ENCODE measurements at regions of chr20 and their contacts with region 1.

Region 1: GRCh38 chr20:35954200-35954906 is at the start of gene SCAND1:
- DNase-seq: peak; percentile 97 to 99 (median 98)
- H3K4me3 ChIP-seq: peak within 1 kb of the TSS; percentile 64 to 96
- H3K4me3 Mint-ChIP-seq: peak within 1 kb of the TSS; percentile 99 to 100 (median 99)
- H3K27ac ChIP-seq: peak within 1 kb of the TSS; percentile 96
- H3K27ac Mint-ChIP-seq: peak within 1 kb of the TSS; percentile 99 to 100 (median 99)
- H3K4me1 ChIP-seq: peaks cover 25% of the 10 kb centered on the region
- H3K4me1 Mint-ChIP-seq: peaks cover 6 to 35% (median 14%) of the 10 kb centered on the region in 4 donors
- H3K27me3 ChIP-seq: no peaks in the 10 kb centered on the region
- H3K27me3 Mint-ChIP-seq: no peaks in the 10 kb centered on the region
- total RNA-seq, gene SCAND1: 45.1 to 53.8 TPM

Region 2: DNA sequence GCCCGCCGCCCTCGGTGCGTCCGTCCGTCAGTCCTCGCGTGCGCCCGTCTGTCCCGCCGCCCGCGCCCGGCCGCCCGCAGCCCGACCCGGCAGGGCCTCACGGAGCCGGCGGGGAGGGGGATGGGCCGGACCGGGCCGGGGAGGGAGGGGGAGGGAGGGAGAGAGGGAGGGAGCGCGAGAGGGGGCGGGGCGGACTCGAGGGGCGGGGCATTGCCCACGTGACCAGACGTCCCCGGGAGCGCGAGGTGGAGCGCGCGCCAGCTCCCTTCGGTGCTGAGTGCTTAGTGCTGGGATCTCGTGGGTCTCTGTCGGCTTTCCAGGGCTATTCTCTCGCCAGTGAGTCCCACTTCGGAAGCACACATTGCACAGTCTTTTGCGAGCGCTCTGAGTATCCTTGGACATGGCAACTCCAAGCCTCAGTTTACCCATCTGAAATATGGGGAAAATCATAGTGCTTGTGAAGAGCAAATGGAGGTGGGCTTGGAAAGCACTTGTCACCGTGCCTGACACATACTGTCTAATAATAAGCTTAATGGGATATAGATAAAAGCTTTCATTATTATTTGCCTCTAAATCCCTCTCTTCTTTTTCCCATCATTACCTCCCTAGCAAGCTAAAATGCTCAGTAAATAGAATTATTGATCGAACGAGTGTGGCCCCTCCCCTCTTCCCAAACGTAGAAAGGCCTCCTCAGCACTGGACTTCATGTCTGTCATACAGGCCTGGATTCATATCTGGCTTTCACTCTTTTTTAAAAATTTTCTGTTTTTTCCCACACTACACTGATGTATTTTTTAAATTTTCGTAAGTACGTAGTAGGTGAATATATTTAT is 1128.6 kb before region 1 on chr20 and contains the start of gene NCOA6:
- CTCF ChIA-PET with region 1: no interaction called
- POLR2A ChIA-PET with region 1: interaction called, 4 read pairs
- intact Hi-C with region 1: loop called (anchors 10 kb)
- DNase-seq: peak; percentile 73 to 79 (median 74)
- H3K4me3 ChIP-seq: peak within 1 kb of the TSS; percentile 80 to 91
- H3K4me3 Mint-ChIP-seq: peak within 1 kb of the TSS; percentile 93 to 98 (median 97)
- H3K27ac ChIP-seq: peak within 1 kb of the TSS; percentile 78
- H3K27ac Mint-ChIP-seq: peak within 1 kb of the TSS; percentile 93 to 99 (median 95)
- H3K4me1 ChIP-seq: peaks cover 34% of the 10 kb centered on the region
- H3K4me1 Mint-ChIP-seq: peaks cover 23 to 48% (median 39%) of the 10 kb centered on the region in 4 donors
- H3K27me3 ChIP-seq: no peaks in the 10 kb centered on the region
- H3K27me3 Mint-ChIP-seq: peaks cover 0 to 1% of the 10 kb centered on the region in 2 donors
- total RNA-seq, gene NCOA6: 29.5 to 29.9 TPM

Region 3: DNA sequence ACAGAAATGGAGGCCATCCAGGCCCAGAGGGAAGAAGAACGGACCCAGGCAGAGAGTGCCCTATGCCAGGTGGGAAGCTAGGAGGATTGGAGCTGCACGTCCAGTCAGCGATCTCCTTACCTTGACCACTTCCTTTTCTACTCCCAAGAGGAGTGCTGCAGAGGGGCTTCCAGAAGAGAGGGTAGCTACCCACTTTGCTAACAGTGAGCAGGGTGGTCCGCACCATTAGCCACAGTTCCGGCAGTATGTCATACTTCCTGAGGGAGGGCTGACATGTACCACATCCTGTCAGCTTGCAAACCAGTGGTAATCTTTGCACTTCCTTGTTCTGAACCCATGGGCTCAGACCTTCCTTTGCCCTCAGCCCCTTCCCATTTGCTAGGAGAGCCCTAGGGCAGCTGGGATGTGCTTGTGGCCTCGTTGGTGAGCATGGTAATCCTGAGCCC is 463.6 kb before region 1 on chr20:
- CTCF ChIA-PET with region 1: interaction called, 3 read pairs
- POLR2A ChIA-PET with region 1: interaction called, 18 read pairs
- intact Hi-C with region 1: no loop called
- DNase-seq: peak; percentile 70 to 84 (median 74)
- H3K4me3 ChIP-seq: peak overlapping the region; percentile 48 to 97
- H3K4me3 Mint-ChIP-seq: peak overlapping the region; percentile 95 to 99 (median 99)
- H3K27ac ChIP-seq: peak overlapping the region; percentile 87
- H3K27ac Mint-ChIP-seq: peak overlapping the region; percentile 94 to 100 (median 98)
- H3K4me1 ChIP-seq: peaks cover 55% of the 10 kb centered on the region
- H3K4me1 Mint-ChIP-seq: peaks cover 38 to 81% (median 56%) of the 10 kb centered on the region in 4 donors
- H3K27me3 ChIP-seq: no peaks in the 10 kb centered on the region
- H3K27me3 Mint-ChIP-seq: no peaks in the 10 kb centered on the region

Region 4: DNA sequence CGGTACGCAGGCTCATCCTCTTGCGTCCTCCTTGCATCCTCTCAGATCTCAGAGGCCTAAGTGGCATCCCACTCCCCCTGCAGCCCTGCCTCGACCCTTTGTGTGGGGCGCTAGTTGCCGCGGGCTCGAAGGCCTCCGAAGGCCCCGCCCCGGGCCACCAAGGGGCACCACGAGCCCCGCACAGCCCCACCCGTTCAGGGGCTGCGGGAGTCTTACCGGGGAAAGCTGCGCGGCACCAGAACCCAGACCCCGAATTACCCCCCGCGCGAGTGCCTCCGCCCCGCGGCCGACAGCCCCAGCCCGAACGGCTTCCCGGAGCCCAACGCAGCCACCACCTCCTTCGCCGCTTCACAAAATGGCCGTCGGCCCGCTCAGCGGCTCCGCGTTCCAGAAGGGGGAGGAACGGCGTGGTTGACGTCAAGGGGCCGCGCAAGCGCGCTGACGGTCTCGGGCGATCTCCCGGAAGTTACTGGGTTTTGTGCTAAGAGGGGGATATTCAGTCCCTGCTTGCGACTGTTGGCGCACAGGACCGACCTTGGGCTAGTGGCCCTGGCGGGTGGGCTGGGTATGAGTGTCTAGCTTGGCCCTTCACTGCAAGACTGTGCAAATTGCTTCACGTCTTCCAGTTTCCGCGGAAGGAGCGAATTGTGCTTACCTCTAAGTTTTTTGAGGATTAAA is 289.7 kb before region 1 on chr20 and contains the starts of genes CPNE1 and RBM12:
- CTCF ChIA-PET with region 1: interaction called, 3 read pairs
- POLR2A ChIA-PET with region 1: interaction called, 36 read pairs
- intact Hi-C with region 1: loop called (anchors 5 kb)
- DNase-seq: peak; percentile 94 to 95 (median 95)
- H3K4me3 ChIP-seq: peak within 1 kb of the TSS; percentile 98 to 99
- H3K4me3 Mint-ChIP-seq: peak within 1 kb of the TSS; percentile 88 to 98 (median 97)
- H3K27ac ChIP-seq: peak within 1 kb of the TSS; percentile 99
- H3K27ac Mint-ChIP-seq: peak within 1 kb of the TSS; percentile 95 to 100 (median 99)
- H3K4me1 ChIP-seq: peaks cover 49% of the 10 kb centered on the region
- H3K4me1 Mint-ChIP-seq: peaks cover 0 to 51% (median 36%) of the 10 kb centered on the region in 4 donors
- H3K27me3 ChIP-seq: no peaks in the 10 kb centered on the region
- H3K27me3 Mint-ChIP-seq: no peaks in the 10 kb centered on the region
- total RNA-seq, gene CPNE1: 316 to 353 TPM
- total RNA-seq, gene RBM12: 129 to 138 TPM

Region 5: DNA sequence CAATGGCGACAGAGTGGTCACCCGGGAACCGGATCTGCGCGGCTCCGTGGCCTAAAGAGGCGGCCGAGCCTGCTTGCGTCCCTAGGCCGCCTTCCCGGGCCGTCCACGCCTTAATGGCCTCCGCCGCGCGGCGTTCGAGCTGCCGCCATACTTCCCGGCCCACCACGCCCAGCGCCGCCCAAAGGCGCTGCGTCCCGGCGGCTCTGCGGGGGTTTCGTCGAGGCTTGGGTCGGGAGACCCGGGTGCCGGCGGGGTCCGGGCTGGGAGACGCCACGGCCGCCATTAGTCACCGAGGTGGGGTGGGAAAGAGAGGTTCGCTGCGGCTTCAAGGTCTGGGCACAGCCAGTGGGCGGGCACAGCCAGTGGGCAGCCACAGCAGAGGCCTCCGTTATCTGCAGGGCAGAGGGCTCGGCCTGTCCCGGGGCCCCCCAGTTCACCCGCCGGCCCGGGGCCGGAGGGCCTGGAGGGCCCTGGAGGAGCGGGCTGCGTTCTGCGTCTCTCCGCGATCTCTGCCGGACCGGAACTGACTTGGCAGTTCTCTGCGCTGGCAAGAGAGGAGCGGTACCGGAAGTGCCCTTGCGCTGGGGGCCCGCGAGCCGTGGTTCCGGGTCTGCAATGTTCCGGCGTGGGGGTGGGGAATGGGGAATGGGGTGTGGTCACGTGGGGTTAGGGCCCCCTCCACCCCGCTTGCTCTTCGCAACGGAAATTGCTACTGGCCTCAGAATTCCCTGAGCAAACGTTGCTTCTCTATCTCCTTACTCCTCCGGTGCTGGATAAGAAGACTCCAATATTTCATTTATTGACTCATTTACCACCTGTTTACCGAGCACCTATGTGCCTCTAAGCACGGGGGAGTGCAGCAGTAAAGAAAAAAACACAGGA is 96.3 kb after region 1 on chr20:
- CTCF ChIA-PET with region 1: no interaction called
- POLR2A ChIA-PET with region 1: interaction called, 25 read pairs
- intact Hi-C with region 1: loop called (anchors 1 kb)
- DNase-seq: peak; percentile 81 to 85 (median 81)
- H3K4me3 ChIP-seq: peak overlapping the region; percentile 21 to 70
- H3K4me3 Mint-ChIP-seq: peak overlapping the region; percentile 90 to 97 (median 95)
- H3K27ac ChIP-seq: peak overlapping the region; percentile 94
- H3K27ac Mint-ChIP-seq: peak overlapping the region; percentile 77 to 96 (median 94)
- H3K4me1 ChIP-seq: peaks cover 34% of the 10 kb centered on the region
- H3K4me1 Mint-ChIP-seq: peaks cover 29 to 52% (median 38%) of the 10 kb centered on the region in 4 donors
- H3K27me3 ChIP-seq: no peaks in the 10 kb centered on the region
- H3K27me3 Mint-ChIP-seq: peaks cover 3% of the 10 kb centered on the region in 2 donors

Region 6: DNA sequence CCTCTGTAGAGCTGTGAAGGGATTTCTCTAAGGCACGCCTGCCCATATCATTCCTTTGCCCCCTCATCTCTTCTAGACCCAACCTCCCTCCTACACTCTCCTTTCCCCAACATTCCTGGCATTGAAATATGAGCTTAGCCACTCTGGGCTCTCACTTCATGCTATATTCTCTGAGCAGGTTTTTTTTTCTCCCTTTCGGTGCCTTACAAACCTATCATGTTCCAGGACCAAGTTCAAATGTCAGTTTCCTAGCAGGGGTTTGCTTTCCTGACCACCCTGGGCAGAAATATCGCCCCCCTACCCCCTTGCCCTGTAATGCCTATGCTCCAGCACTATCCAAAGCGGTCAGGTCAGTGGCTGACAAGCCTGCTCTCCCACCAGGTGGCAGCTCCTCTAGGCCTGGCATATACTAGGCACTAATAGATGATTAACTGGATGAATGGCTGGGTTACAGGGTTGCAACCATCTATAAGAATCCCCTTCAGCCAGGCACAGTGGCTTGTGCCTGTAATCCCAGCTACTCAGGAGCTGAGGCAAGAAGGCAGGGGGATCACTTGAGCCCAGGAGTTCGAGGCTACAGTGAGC is 256.2 kb after region 1 on chr20:
- CTCF ChIA-PET with region 1: no interaction called
- POLR2A ChIA-PET with region 1: no interaction called
- intact Hi-C with region 1: no loop called
- DNase-seq: no peak
- H3K4me3 ChIP-seq: no peak overlapping the region
- H3K4me3 Mint-ChIP-seq: no peak overlapping the region
- H3K27ac ChIP-seq: no peak overlapping the region
- H3K27ac Mint-ChIP-seq: no peak overlapping the region
- H3K4me1 ChIP-seq: no peaks in the 10 kb centered on the region
- H3K4me1 Mint-ChIP-seq: no peaks in the 10 kb centered on the region
- H3K27me3 ChIP-seq: no peaks in the 10 kb centered on the region
- H3K27me3 Mint-ChIP-seq: peaks cover 4 to 6% of the 10 kb centered on the region in 2 donors

Region 7: GRCh38 chr20:37095599-37096414 is 1141.5 kb after region 1 on chr20 and contains the start of gene RBL1:
- CTCF ChIA-PET with region 1: no interaction called
- POLR2A ChIA-PET with region 1: no interaction called
- intact Hi-C with region 1: loop called (anchors 5 kb)
- DNase-seq: peak; percentile 90 to 92 (median 91)
- H3K4me3 ChIP-seq: peak within 1 kb of the TSS; percentile 92
- H3K4me3 Mint-ChIP-seq: peak within 1 kb of the TSS; percentile 98 to 100 (median 99)
- H3K27ac ChIP-seq: peak within 1 kb of the TSS; percentile 85
- H3K27ac Mint-ChIP-seq: peak within 1 kb of the TSS; percentile 99 to 100 (median 100)
- H3K4me1 ChIP-seq: peaks cover 37% of the 10 kb centered on the region
- H3K4me1 Mint-ChIP-seq: peaks cover 18 to 47% (median 30%) of the 10 kb centered on the region in 4 donors
- H3K27me3 ChIP-seq: no peaks in the 10 kb centered on the region
- H3K27me3 Mint-ChIP-seq: peaks cover 0 to 4% of the 10 kb centered on the region in 2 donors
- total RNA-seq, gene RBL1: 29.9 to 39.6 TPM

Measured in CD4-positive, alpha-beta memory T cell (primary cell).